ENCODE measurements at regions of chr19 and their contacts with region 1.

Region 1: DNA sequence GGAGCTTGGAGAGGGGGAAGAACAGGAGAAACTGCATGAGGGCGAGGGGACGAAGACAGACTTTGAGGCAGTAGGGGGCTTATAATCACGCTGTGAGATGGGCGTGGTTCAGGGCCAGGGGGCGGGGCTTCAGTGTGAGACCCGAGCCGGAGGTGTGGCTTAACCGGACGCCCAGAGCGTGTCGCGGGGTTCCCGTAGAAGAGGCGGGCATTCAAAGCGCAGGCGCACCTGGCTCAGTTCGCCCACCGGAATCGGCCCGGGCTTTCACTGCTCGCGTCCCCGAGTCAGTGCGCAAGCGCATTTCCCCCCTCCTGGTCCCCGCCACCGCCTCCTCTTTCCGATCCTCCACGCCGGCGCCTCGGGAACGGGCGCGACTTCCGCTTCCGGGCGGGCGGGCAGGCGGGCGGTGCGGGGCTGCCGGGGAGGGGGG is 225 bp upstream of the ZNF865 start:
- DNase-seq: peak; percentile 93 to 99
- ATAC-seq: peak; percentile 72 to 85
- H3K4me3 ChIP-seq: peak overlapping the region; percentile 82
- H3K27ac ChIP-seq: peak overlapping the region; percentile 94 to 95
- H3K4me1 ChIP-seq: peaks cover 23% of the 10 kb centered on the region
- CTCF ChIP-seq: no peak
- EP300 ChIP-seq: no peak
- POLR2A ChIP-seq: no peak
- RAD21 ChIP-seq: no peak

Region 2: GRCh38 chr19:55467236-55468053 is 137.8 kb before region 1 on chr19:
- CTCF ChIA-PET with region 1: interaction called, 58 read pairs
- POLR2A ChIA-PET with region 1: no interaction called
- DNase-seq: peak; percentile 48 to 73
- ATAC-seq: peak; percentile 75 to 93
- H3K4me3 ChIP-seq: no peak overlapping the region
- H3K27ac ChIP-seq: peak overlapping the region; percentile 6 to 35; a peak in 3 of 6 replicates
- H3K4me1 ChIP-seq: peaks cover 6% of the 10 kb centered on the region; the same call in 2 of the 3 replicates
- CTCF ChIP-seq: peak; percentile 99
- EP300 ChIP-seq: no peak
- POLR2A ChIP-seq: no peak
- RAD21 ChIP-seq: peak; percentile 57 to 73

Region 3: GRCh38 chr19:55484593-55485438 is 120.4 kb before region 1 on chr19 and contains the start of gene NAT14:
- CTCF ChIA-PET with region 1: interaction called, 21 read pairs
- POLR2A ChIA-PET with region 1: interaction called, 5 read pairs
- DNase-seq: peak; percentile 77 to 94
- ATAC-seq: peak; percentile 33 to 71
- H3K4me3 ChIP-seq: peak within 1 kb of the TSS; percentile 75
- H3K27ac ChIP-seq: peak within 1 kb of the TSS; percentile 89 to 93
- H3K4me1 ChIP-seq: peaks cover 50% of the 10 kb centered on the region
- CTCF ChIP-seq: no peak
- EP300 ChIP-seq: no peak
- POLR2A ChIP-seq: peak; percentile 22
- RAD21 ChIP-seq: no peak
- polyA plus RNA-seq, gene NAT14: 16.8 and 21.0 TPM in 2 replicates

Region 4: GRCh38 chr19:55526216-55527196 is 78.7 kb before region 1 on chr19:
- CTCF ChIA-PET with region 1: interaction called, 13 read pairs
- POLR2A ChIA-PET with region 1: interaction called, 8 read pairs
- DNase-seq: peak; percentile 82 to 95
- ATAC-seq: peak; percentile 79 to 88
- H3K4me3 ChIP-seq: no peak overlapping the region
- H3K27ac ChIP-seq: peak overlapping the region; percentile 64 to 78
- H3K4me1 ChIP-seq: peaks cover 48% of the 10 kb centered on the region
- CTCF ChIP-seq: no peak
- EP300 ChIP-seq: peak in 1 of 2 experiments; percentile 43; a peak in 1 of 5 replicates
- POLR2A ChIP-seq: no peak
- RAD21 ChIP-seq: peak in 1 of 2 experiments; percentile 9; a peak in 1 of 5 replicates

Region 5: GRCh38 chr19:55549500-55550320 is 55.5 kb before region 1 on chr19:
- CTCF ChIA-PET with region 1: interaction called, 42 read pairs
- POLR2A ChIA-PET with region 1: interaction called, 44 read pairs
- DNase-seq: peak; percentile 88
- ATAC-seq: peak; percentile 74 to 75
- H3K4me3 ChIP-seq: peak overlapping the region; percentile 38
- H3K27ac ChIP-seq: peak overlapping the region; percentile 97 to 99
- H3K4me1 ChIP-seq: peaks cover 76% of the 10 kb centered on the region
- CTCF ChIP-seq: no peak; the same call in 2 of the 3 replicates
- EP300 ChIP-seq: no peak
- POLR2A ChIP-seq: peak; percentile 33; the same call in 1 of the 2 replicates
- RAD21 ChIP-seq: peak; percentile 41 to 42; a peak in 2 of 5 replicates

Region 6: DNA sequence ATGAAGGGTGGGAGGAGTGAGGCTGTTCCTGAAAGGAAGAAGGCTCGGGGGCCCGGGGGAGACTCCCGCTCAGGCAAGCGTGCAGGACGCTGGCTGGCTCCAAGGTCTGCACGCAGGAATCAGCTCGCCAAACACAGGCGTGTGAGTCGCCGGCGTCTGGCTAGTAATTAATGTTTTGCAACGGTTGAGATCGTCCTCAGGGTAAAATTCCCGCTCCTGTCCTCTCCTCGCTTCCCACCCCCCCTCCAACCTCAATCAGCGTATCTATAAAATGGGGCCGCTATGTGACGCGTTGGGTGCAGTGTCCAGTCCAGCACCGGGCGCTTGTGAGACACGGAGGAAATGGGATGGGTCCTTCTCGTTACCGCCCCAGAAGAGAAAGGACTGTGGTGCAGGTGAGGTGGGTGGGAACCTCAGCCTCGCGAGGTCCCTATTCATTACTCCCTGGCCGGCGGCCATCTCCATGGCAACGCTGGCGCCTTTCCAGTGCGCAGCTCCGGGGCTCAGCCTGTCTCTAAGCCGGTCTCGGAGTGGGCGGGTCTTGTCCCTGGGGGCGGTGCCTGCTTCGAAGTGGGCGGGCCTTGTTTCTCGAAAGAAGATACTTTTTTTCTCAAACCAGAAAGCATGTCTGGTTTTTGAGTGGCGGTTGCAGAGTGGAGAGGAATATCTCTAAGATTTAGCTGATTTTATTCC is 18.1 kb before region 1 on chr19:
- CTCF ChIA-PET with region 1: interaction called, 20 read pairs
- POLR2A ChIA-PET with region 1: interaction called, 23 read pairs
- DNase-seq: peak; percentile 97 to 98
- ATAC-seq: peak; percentile 86 to 88
- H3K4me3 ChIP-seq: peak overlapping the region; percentile 43
- H3K27ac ChIP-seq: peak overlapping the region; percentile 53 to 79
- H3K4me1 ChIP-seq: peaks cover 22% of the 10 kb centered on the region
- CTCF ChIP-seq: no peak
- EP300 ChIP-seq: no peak
- POLR2A ChIP-seq: no peak
- RAD21 ChIP-seq: no peak; a peak in 1 of 5 replicates

Region 7: GRCh38 chr19:55678121-55678675 is 73.0 kb after region 1 on chr19:
- CTCF ChIA-PET with region 1: no interaction called
- POLR2A ChIA-PET with region 1: no interaction called
- DNase-seq: no peak
- ATAC-seq: no peak
- H3K4me3 ChIP-seq: no peak overlapping the region
- H3K27ac ChIP-seq: no peak overlapping the region
- H3K4me1 ChIP-seq: peaks cover 29% of the 10 kb centered on the region
- CTCF ChIP-seq: no peak
- EP300 ChIP-seq: no peak
- POLR2A ChIP-seq: no peak
- RAD21 ChIP-seq: no peak